ENCODE measurements at regions of chr19 and their contacts with region 1.

Region 1: DNA sequence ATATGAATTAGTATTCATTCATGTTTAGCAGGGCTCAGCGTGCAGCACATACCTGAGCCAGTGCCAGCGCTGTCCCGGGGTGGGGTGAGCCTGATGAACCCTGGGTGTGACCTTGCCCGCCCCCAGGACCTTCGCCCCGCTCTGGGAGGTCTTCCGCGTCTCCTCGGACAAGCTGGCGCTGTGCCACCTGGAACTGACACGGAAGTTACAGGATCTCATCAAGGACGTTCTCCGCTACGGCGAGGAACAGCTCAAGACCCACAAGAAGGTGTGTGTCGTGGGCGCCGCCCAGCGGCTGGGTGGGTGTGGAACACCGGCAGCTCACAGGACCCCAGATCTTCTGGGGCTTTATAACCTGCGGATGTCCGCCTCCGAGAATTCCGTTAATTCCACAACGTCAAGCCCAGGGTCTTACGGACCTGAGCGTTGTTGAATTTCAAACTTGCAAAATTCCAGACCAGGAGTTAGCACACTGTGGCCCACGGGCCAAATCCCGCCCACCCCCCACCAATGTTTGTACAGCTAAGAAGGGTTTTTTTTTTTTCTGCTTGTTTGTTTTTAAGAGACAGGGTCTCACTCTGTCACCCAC is 15.4 kb downstream of the FCHO1 start:
- DNase-seq: no peak
- ATAC-seq: peak; percentile 84
- H3K4me3 ChIP-seq: no peak overlapping the region
- H3K27ac ChIP-seq: no peak overlapping the region
- H3K4me1 ChIP-seq: no peaks in the 10 kb centered on the region
- H3K27me3 ChIP-seq: no peaks in the 10 kb centered on the region
- CTCF ChIP-seq: peak; percentile 82 to 85 (median 84)
- EP300 ChIP-seq: no peak
- POLR2A ChIP-seq: no peak
- RAD21 ChIP-seq: peak; percentile 87

Region 2: DNA sequence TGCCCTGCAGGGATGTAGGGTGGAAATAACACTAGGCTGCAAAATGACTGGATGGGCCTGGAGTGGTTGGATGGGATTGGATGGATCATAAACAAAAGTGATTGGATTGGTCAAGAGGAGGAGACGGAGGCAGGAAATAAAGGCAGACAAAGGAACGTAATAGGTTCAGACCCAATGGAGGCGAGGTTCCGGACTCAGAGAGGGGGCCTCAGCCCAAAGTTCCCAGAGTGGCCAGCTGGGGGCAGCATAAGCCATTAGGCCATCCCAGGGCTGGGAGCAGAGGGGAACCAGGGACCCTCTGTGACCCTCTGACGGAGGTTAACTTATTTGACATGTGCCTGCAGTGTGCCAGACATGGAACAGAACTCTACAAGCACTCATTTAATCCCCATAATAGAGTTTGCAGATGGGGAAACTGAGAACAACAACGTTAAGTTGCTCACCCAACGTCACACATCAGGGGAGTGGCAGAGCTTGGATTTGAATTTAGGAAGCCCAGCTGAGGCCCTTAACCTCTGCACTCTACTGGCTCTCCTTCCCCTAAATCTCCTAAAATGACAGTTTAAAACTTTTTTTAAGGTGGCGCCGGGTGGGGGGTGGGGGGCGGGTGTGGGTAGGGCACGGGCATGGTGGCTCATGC is 62.7 kb before region 1 on chr19:
- CTCF ChIA-PET with region 1: interaction called, 108 read pairs
- POLR2A ChIA-PET with region 1: no interaction called
- RAD21 ChIA-PET with region 1: interaction called, 31 read pairs
- SMC1A ChIA-PET with region 1: interaction called, 39 read pairs
- in situ Hi-C with region 1: no loop called
- intact Hi-C with region 1: loop called (anchors 1 kb)
- DNase-seq: no peak
- ATAC-seq: peak; percentile 93
- H3K4me3 ChIP-seq: no peak overlapping the region
- H3K27ac ChIP-seq: no peak overlapping the region
- H3K4me1 ChIP-seq: no peaks in the 10 kb centered on the region
- H3K27me3 ChIP-seq: no peaks in the 10 kb centered on the region; a peak in 1 of 4 replicates
- CTCF ChIP-seq: peak; percentile 82 to 93 (median 88)
- EP300 ChIP-seq: no peak
- POLR2A ChIP-seq: no peak
- RAD21 ChIP-seq: peak; percentile 80

Region 3: DNA sequence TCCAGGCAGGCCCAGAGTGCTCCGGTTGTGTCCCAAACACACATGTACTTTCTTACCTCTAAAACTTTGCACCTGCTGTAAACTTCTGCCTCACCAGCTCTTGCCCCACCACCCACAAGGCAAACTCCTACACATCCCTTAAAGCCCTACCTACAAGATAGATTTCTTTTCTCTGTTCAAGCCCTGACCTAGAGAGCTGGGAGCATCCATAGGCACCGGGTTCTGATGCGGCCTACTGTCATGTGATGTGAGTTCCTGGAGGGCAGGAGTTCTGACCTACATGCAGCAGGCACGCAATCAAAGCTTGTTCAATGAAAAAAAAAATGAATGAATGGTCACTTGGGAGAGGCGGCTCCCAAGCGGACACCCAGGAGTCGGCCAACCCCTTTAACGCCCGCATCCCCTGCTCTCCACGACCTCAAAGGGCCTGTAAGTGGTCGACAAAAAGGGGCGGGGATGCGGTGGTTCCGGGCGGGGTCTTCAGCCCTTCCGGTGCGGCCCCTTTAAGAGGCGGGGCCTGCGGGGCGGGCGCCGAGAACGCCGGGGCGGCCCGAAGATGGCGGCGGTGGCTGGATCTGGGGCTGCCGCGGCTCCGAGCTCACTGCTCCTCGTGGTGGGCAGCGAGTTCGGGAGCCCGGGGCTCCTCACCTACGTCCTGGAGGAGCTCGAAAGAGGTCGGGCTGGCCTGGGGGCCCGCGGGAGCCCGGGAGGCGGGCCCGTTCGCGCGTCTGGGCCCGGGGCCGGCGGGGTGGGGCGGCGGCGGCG is 47.5 kb before region 1 on chr19 and contains the start of gene MAP1S:
- CTCF ChIA-PET with region 1: interaction called, 11 read pairs
- POLR2A ChIA-PET with region 1: interaction called, 3 read pairs
- RAD21 ChIA-PET with region 1: interaction called, 6 read pairs
- SMC1A ChIA-PET with region 1: interaction called, 4 read pairs
- in situ Hi-C with region 1: no loop called
- intact Hi-C with region 1: no loop called
- DNase-seq: no peak
- ATAC-seq: peak; percentile 90
- H3K4me3 ChIP-seq: peak within 1 kb of the TSS; percentile 99
- H3K27ac ChIP-seq: peak within 1 kb of the TSS; percentile 38; the same call in 1 of the 2 replicates
- H3K4me1 ChIP-seq: peaks cover 27% of the 10 kb centered on the region
- H3K27me3 ChIP-seq: no peaks in the 10 kb centered on the region
- CTCF ChIP-seq: no peak
- EP300 ChIP-seq: no peak
- POLR2A ChIP-seq: peak; percentile 91
- RAD21 ChIP-seq: no peak
- polyA plus RNA-seq, gene MAP1S: 2.1 to 3.4 TPM

Region 4: GRCh38 chr19:17739121-17739875 is 27.3 kb before region 1 on chr19:
- CTCF ChIA-PET with region 1: interaction called, 10 read pairs
- POLR2A ChIA-PET with region 1: interaction called, 4 read pairs
- RAD21 ChIA-PET with region 1: interaction called, 7 read pairs
- SMC1A ChIA-PET with region 1: interaction called, 6 read pairs
- in situ Hi-C with region 1: no loop called
- intact Hi-C with region 1: no loop called
- DNase-seq: peak; percentile 40
- ATAC-seq: peak; percentile 83
- H3K4me3 ChIP-seq: no peak overlapping the region
- H3K27ac ChIP-seq: peak overlapping the region; percentile 45; the same call in 1 of the 2 replicates
- H3K4me1 ChIP-seq: peaks cover 16% of the 10 kb centered on the region
- H3K27me3 ChIP-seq: no peaks in the 10 kb centered on the region
- CTCF ChIP-seq: no peak
- EP300 ChIP-seq: peak in 1 of 2 experiments; percentile 74; a peak in 1 of 4 replicates
- POLR2A ChIP-seq: no peak
- RAD21 ChIP-seq: no peak

Region 5: DNA sequence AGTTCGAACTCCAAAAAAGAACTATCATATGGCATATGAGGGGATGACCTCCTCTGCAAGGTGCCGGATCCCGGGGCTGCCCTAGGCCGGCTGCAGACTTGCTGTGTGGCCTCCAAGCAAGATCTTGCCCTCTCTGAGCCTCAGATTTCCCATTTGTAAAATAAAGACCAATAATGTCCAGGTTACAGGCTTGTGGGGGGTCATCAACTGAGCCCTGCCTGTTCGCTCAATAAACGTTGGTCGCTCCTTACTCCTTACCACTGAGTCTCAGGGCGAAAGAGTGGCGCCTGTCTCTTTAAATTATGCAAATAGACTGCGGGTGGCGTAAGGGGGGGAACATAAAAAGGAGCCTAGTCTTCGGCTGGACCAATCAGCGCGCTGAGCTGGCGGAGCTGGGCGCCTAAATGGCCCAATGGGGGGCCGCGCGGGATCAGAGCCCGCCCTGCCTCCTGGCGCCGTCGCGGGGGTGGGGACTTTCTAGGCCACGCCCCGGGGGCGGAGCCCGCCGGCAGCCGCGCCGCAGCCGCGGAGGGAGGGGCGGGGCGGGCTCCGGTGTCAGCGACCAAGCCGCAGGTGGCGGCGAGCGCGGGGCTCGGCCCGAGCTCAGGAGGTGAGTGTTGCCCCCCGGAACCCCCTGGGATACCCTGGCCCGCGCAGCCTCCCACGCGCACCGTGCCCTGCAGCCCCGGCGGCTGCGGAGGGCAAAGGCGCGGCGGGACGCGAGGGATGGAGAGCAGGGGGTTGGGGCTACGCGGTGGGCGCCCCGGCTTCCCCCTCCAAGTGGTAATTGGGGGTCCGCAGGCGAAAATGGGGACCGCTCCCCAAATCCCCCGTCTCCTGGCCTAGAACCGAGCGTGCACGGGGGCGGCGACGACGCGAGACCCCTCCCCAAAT is 19.2 kb before region 1 on chr19:
- CTCF ChIA-PET with region 1: interaction called, 32 read pairs
- POLR2A ChIA-PET with region 1: interaction called, 4 read pairs
- RAD21 ChIA-PET with region 1: interaction called, 7 read pairs
- SMC1A ChIA-PET with region 1: interaction called, 9 read pairs
- in situ Hi-C with region 1: no loop called
- intact Hi-C with region 1: no loop called
- DNase-seq: peak; percentile 68
- ATAC-seq: peak; percentile 87
- H3K4me3 ChIP-seq: peak overlapping the region; percentile 77
- H3K27ac ChIP-seq: peak overlapping the region; percentile 55
- H3K4me1 ChIP-seq: peaks cover 23% of the 10 kb centered on the region
- H3K27me3 ChIP-seq: no peaks in the 10 kb centered on the region
- CTCF ChIP-seq: no peak
- EP300 ChIP-seq: no peak
- POLR2A ChIP-seq: peak; percentile 57; the same call in 1 of the 2 replicates
- RAD21 ChIP-seq: no peak

Region 6: DNA sequence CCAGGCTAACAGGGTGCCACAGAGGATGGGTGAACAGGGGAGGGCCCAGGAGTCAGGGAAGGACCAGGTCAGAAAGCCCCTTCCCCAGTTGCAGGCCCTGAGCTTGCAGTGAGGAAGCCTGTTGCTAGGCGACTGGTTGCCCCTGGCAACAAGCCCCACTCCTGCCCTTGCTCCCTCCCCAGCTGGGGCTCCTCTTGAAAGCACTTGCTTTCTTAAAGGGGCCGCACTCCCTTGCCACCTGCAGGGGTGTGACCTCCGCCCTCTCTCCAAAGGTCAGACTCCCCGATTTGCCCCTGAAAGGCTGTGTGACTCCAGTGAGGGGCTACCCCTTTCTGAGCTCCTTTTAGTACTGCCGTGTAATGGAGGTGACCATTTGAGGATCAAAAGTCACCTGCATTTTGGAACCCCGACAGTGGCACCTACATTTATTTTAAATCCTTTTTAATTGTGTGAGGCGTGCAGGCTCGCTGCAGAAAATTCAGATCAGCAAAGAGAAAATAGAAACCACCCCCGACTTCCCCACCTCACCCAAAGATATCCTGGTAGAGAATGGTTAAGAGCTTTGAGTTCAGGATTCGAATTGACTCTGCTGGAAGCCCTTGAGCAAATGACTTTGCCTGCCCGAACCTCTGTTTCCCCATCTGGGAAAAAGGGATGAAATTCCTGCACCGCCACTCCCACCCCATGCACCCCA is 10.5 kb before region 1 on chr19:
- CTCF ChIA-PET with region 1: interaction called, 32 read pairs
- POLR2A ChIA-PET with region 1: interaction called, 4 read pairs
- RAD21 ChIA-PET with region 1: interaction called, 21 read pairs
- SMC1A ChIA-PET with region 1: interaction called, 40 read pairs
- in situ Hi-C with region 1: no loop called
- intact Hi-C with region 1: no loop called
- DNase-seq: peak; percentile 37
- ATAC-seq: peak; percentile 45
- H3K4me3 ChIP-seq: peak overlapping the region; percentile 69
- H3K27ac ChIP-seq: peak overlapping the region; percentile 66
- H3K4me1 ChIP-seq: peaks cover 61% of the 10 kb centered on the region
- H3K27me3 ChIP-seq: no peaks in the 10 kb centered on the region
- CTCF ChIP-seq: no peak
- EP300 ChIP-seq: no peak
- POLR2A ChIP-seq: no peak
- RAD21 ChIP-seq: no peak

Region 7: GRCh38 chr19:17902701-17903100 is 136.1 kb after region 1 on chr19:
- CTCF ChIA-PET with region 1: no interaction called
- POLR2A ChIA-PET with region 1: no interaction called
- RAD21 ChIA-PET with region 1: no interaction called
- SMC1A ChIA-PET with region 1: no interaction called
- in situ Hi-C with region 1: no loop called
- intact Hi-C with region 1: no loop called
- DNase-seq: no peak
- ATAC-seq: no peak
- H3K4me3 ChIP-seq: no peak overlapping the region
- H3K27ac ChIP-seq: no peak overlapping the region
- H3K4me1 ChIP-seq: no peaks in the 10 kb centered on the region
- H3K27me3 ChIP-seq: no peaks in the 10 kb centered on the region
- CTCF ChIP-seq: no peak
- EP300 ChIP-seq: no peak
- POLR2A ChIP-seq: no peak
- RAD21 ChIP-seq: no peak